Mammary epithelial cell (primary cell): ENCODE measurements at regions of chr12 and their contacts with region 1.

Region 1: GRCh38 chr12:6461401-6462233 is 8.9 kb downstream of the VAMP1 start:
- DNase-seq: no peak
- H3K4me3 ChIP-seq: no peak overlapping the region
- H3K27ac ChIP-seq: no peak overlapping the region
- H3K4me1 ChIP-seq: no peaks in the 10 kb centered on the region
- H3K27me3 ChIP-seq: no peaks in the 10 kb centered on the region
- CTCF ChIP-seq: no peak

Region 2: GRCh38 chr12:6323340-6323994 is 138.2 kb before region 1 on chr12:
- CTCF ChIA-PET with region 1: no interaction called
- dilution Hi-C with region 1: loop called (anchors 5 kb)
- in situ Hi-C with region 1: no loop called
- intact Hi-C with region 1: loop called (anchors 5 kb)
- DNase-seq: peak; percentile 89
- H3K4me3 ChIP-seq: no peak overlapping the region
- H3K27ac ChIP-seq: peak overlapping the region; percentile 5
- H3K4me1 ChIP-seq: peaks cover 16% of the 10 kb centered on the region
- H3K27me3 ChIP-seq: no peaks in the 10 kb centered on the region
- CTCF ChIP-seq: peak; percentile 46 to 59

Region 3: DNA sequence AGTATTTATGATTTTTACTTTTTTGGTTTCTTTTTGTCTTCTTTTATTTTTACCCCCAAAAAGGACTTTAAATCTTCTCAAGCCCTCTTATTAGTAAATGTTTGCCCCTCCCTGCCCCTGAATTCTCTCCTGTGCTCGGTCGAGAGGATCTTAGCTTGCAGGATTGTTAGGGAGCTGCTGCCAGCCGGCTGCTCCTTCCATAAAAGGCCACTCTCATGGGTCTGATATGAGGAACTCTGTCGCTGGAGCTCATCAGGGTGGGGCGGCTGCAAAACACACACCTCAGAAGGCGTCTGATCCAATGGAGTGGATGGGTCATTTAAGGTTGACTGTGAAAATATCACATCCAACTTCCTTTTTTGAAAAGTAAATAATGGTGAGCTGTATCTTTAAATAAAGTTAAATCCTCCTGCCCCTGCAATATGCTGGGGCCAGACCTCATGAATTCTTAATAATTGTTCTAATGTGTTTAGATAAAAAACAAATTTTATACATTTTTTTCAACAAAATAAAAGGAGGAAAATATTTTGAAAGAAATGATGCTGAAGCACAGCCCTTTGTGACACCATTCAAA is 69.0 kb before region 1 on chr12:
- CTCF ChIA-PET with region 1: no interaction called
- dilution Hi-C with region 1: no loop called
- in situ Hi-C with region 1: no loop called
- intact Hi-C with region 1: no loop called
- DNase-seq: no peak
- H3K4me3 ChIP-seq: no peak overlapping the region
- H3K27ac ChIP-seq: no peak overlapping the region
- H3K4me1 ChIP-seq: no peaks in the 10 kb centered on the region
- H3K27me3 ChIP-seq: no peaks in the 10 kb centered on the region
- CTCF ChIP-seq: no peak

Region 4: GRCh38 chr12:6434205-6435140 is 27.1 kb before region 1 on chr12:
- CTCF ChIA-PET with region 1: no interaction called
- dilution Hi-C with region 1: no loop called
- in situ Hi-C with region 1: no loop called
- intact Hi-C with region 1: no loop called
- DNase-seq: no peak
- H3K4me3 ChIP-seq: no peak overlapping the region
- H3K27ac ChIP-seq: no peak overlapping the region
- H3K4me1 ChIP-seq: peaks cover 16% of the 10 kb centered on the region
- H3K27me3 ChIP-seq: no peaks in the 10 kb centered on the region
- CTCF ChIP-seq: no peak